ENCODE measurements at regions of chr20 and their contacts with region 1.

Region 1: GRCh38 chr20:50943069-50943468 is 11.8 kb upstream of the ADNP start:
- DNase-seq: no peak
- H3K4me3 ChIP-seq: no peak overlapping the region
- H3K27ac ChIP-seq: no peak overlapping the region
- H3K4me1 ChIP-seq: no peaks in the 10 kb centered on the region
- H3K27me3 ChIP-seq: no peaks in the 10 kb centered on the region
- CTCF ChIP-seq: no peak

Region 2: GRCh38 chr20:50824193-50824632 is 118.9 kb before region 1 on chr20:
- CTCF ChIA-PET with region 1: no interaction called
- POLR2A ChIA-PET with region 1: interaction called, 18 read pairs
- intact Hi-C with region 1: no loop called
- DNase-seq: peak; percentile 68 to 85
- H3K4me3 ChIP-seq: no peak overlapping the region
- H3K27ac ChIP-seq: peak overlapping the region; percentile 40
- H3K4me1 ChIP-seq: peaks cover 10% of the 10 kb centered on the region; the same call in 1 of the 2 replicates
- H3K27me3 ChIP-seq: no peaks in the 10 kb centered on the region
- CTCF ChIP-seq: no peak

Region 3: GRCh38 chr20:50958615-50959542 is 15.8 kb after region 1 on chr20 and contains the start of gene MOCS3:
- CTCF ChIA-PET with region 1: no interaction called
- POLR2A ChIA-PET with region 1: interaction called, 11 read pairs
- intact Hi-C with region 1: no loop called
- DNase-seq: peak; percentile 82 to 92
- H3K4me3 ChIP-seq: peak within 1 kb of the TSS; percentile 93
- H3K27ac ChIP-seq: peak within 1 kb of the TSS; percentile 83
- H3K4me1 ChIP-seq: peaks cover 38% of the 10 kb centered on the region
- H3K27me3 ChIP-seq: no peaks in the 10 kb centered on the region
- CTCF ChIP-seq: no peak
- total RNA-seq, gene MOCS3: 4.8 and 5.5 TPM in 2 replicates

Region 4: DNA sequence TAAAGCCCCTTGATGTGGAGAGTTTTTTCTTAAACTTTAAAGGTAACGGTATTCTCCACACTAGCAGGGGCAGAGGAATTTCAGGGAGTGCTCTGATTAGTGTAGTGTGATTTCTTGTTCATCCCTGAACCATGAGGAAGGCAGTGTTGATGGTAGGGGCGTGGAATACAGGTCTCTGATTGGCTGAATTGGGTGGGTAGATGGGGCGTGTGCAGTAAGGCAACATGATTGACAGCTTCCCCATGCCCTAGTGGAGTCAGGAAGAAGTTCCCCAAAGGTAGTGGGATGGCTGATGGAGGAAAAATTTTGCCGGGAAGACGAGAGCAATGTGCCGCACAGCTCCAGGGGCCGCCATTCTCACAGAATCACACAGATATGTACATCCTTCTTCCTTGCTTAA is 956.6 kb after region 1 on chr20:
- CTCF ChIA-PET with region 1: no interaction called
- POLR2A ChIA-PET with region 1: interaction called, 18 read pairs
- intact Hi-C with region 1: no loop called
- DNase-seq: no peak
- H3K4me3 ChIP-seq: no peak overlapping the region
- H3K27ac ChIP-seq: no peak overlapping the region
- H3K4me1 ChIP-seq: peaks cover 16% of the 10 kb centered on the region
- H3K27me3 ChIP-seq: no peaks in the 10 kb centered on the region
- CTCF ChIP-seq: no peak

Measured in PC-9 (cell line).